ENCODE measurements at regions of chr2 and their contacts with region 1.

Region 1: GRCh38 chr2:86464652-86465051 is 23.5 kb downstream of the KDM3A start:
- DNase-seq: no peak
- ATAC-seq: no peak
- H3K4me3 ChIP-seq: no peak overlapping the region
- H3K4me3 Mint-ChIP-seq: no peak overlapping the region
- H3K27ac ChIP-seq: no peak overlapping the region
- H3K27ac Mint-ChIP-seq: peak overlapping the region; percentile 7
- H3K4me1 ChIP-seq: peaks cover 14% of the 10 kb centered on the region
- H3K4me1 Mint-ChIP-seq: peaks cover 49% of the 10 kb centered on the region
- H3K27me3 ChIP-seq: no peaks in the 10 kb centered on the region
- H3K27me3 Mint-ChIP-seq: no peaks in the 10 kb centered on the region
- CTCF ChIP-seq: no peak

Region 2: DNA sequence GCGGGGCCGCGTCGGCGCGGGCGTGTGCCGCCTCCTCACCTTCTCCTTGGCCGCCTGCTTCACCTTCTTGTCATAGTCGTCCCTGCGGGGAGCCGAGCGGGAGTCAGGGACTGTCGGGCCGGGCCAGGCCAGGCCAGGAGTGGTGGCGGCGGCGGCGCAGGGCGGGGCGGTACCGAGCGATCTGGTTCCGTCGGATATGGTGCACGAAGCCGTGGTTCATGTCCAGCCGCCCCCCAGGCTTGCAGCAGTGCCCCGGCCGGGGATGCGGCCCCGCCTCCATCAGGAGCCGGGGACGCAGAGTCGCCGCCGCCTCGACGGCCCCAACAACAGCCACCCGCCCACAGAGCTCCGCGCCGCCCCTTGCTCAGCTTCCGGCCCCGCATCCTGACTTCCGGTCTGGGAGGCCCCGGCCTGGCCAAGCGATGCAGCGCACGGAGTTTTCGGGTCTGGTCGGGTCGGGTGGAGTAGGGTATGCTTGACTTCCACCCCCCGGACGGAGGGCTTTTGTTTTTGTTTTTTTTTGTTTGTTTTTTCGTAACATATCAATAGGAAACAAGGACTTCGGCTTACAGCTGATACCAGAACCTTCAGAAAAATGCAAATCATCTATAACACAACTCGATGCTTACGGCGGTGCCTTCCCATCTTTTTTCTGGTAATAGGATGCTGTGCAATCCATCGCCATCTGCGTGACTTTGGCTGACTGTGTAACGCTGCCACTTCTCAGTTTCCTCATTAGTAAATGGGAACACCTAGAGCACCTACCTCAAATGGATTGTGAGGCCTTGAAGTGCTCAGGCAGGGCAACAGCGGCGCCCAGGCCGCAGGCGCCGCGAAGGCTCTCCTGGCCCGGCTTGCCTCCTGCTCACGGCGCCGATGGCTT is 852.7 kb before region 1 on chr2 and contains the start of gene C2orf68:
- CTCF ChIA-PET with region 1: no interaction called
- POLR2A ChIA-PET with region 1: no interaction called
- intact Hi-C with region 1: no loop called
- DNase-seq: peak; percentile 49 to 90 (median 83)
- ATAC-seq: peak; percentile 55
- H3K4me3 ChIP-seq: peak within 1 kb of the TSS; percentile 53 to 55
- H3K4me3 Mint-ChIP-seq: peak within 1 kb of the TSS; percentile 97
- H3K27ac ChIP-seq: peak within 1 kb of the TSS; percentile 61 to 70
- H3K27ac Mint-ChIP-seq: peak within 1 kb of the TSS; percentile 95
- H3K4me1 ChIP-seq: peaks cover 26% of the 10 kb centered on the region
- H3K4me1 Mint-ChIP-seq: peaks cover 39% of the 10 kb centered on the region
- H3K27me3 ChIP-seq: no peaks in the 10 kb centered on the region
- H3K27me3 Mint-ChIP-seq: no peaks in the 10 kb centered on the region
- CTCF ChIP-seq: no peak
- total RNA-seq, gene C2orf68: 23.2 to 27.9 TPM

Region 3: DNA sequence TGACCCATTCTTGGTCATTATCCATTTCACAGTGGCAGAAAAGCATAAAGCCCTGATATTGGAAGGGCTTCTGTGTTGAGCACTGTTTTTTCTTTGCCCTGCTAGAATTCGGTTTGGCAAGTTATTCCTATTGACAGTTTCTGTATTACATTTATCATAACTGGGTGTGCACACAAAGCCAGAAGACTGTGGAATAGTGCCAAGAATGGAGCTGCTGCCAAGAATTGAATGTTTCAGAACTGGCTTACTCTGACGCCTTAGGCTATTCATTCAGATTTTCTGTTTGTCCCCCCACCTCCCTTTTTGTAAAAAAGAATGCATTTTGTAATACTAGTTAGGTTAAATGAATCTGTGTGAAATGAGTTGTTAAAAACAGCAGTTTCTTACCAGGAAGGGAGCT is 10.8 kb before region 1 on chr2:
- CTCF ChIA-PET with region 1: interaction called, 3 read pairs
- POLR2A ChIA-PET with region 1: interaction called, 4 read pairs
- intact Hi-C with region 1: loop called in 1 of 2 experiments (anchors 1 kb)
- DNase-seq: no peak
- ATAC-seq: no peak
- H3K4me3 ChIP-seq: no peak overlapping the region
- H3K4me3 Mint-ChIP-seq: no peak overlapping the region
- H3K27ac ChIP-seq: no peak overlapping the region
- H3K27ac Mint-ChIP-seq: no peak overlapping the region
- H3K4me1 ChIP-seq: peaks cover 8% of the 10 kb centered on the region
- H3K4me1 Mint-ChIP-seq: peaks cover 42% of the 10 kb centered on the region
- H3K27me3 ChIP-seq: no peaks in the 10 kb centered on the region
- H3K27me3 Mint-ChIP-seq: no peaks in the 10 kb centered on the region
- CTCF ChIP-seq: no peak

Region 4: DNA sequence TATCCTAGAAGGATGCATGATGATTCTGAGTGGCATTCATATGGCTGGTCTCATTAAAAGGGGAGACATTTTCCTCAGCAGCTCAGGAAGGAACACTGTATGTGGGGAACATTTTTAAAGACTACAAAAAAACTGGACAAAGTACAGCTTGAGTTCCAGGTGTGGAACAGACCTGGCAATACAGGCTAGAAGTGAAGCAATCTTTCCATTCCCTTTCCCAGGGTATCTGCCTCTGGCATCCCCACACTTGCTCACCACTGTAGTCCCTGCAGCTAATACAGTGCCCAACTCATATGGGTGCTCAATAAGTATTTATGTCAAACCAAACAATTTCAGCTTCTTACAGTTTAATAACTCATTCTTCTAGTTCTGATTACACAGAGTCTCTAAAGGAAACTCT is 150.9 kb after region 1 on chr2:
- CTCF ChIA-PET with region 1: no interaction called
- POLR2A ChIA-PET with region 1: no interaction called
- intact Hi-C with region 1: no loop called
- DNase-seq: no peak
- ATAC-seq: no peak
- H3K4me3 ChIP-seq: no peak overlapping the region
- H3K4me3 Mint-ChIP-seq: no peak overlapping the region
- H3K27ac ChIP-seq: no peak overlapping the region
- H3K27ac Mint-ChIP-seq: no peak overlapping the region
- H3K4me1 ChIP-seq: peaks cover 9% of the 10 kb centered on the region
- H3K4me1 Mint-ChIP-seq: peaks cover 72% of the 10 kb centered on the region
- H3K27me3 ChIP-seq: no peaks in the 10 kb centered on the region
- H3K27me3 Mint-ChIP-seq: no peaks in the 10 kb centered on the region
- CTCF ChIP-seq: no peak